Esophagus squamous epithelium (tissue), 5 donors: ENCODE measurements at regions of chr1 and their contacts with region 1.

Region 1: DNA sequence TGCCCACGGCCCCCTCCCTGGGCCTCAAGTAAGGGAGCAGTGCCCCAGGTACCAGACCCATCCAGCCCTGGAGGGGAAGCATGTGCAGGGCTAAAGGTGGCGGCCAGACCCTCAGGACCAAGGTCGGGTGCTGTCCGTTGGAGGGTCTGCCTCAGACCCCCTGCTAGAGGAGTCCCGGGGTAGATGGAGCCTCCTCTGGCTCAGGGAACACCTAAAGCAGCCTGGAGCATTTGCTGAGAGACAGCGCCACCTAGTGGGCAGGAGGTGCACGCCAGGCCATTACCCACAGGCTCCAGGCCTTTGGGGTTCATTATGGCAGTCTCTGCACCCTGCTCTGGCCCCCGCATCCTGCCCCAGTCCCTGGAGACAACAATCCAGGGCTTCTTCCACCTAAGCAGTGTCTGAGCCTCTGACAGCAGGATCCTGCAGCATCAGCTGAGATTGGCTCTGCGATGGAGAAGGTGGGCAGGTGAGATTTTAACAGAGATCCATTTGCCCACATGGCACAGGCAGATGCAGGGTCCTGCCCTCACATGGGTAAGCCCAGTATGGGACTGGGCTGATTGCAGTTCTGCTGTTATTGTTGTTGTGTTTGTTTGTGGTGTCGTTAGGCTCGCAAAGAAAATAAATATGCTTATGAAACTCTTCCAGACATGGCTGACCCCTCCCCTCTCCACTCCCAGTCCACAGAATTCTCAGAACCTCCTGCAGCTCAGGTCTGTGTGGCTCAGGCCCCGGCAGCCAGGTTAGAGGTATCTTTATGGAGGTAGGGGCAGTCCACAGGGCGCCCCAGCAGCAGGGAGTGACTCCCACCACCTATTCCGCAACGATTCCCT is 42.4 kb downstream of the CTNNBIP1 start:
- DNase-seq: peak; percentile 47
- H3K4me3 ChIP-seq: no peak overlapping the region
- H3K27ac ChIP-seq: peak overlapping the region in 2 of 4 donors; percentile 89 to 90
- H3K4me1 ChIP-seq: peaks cover 12 to 79% (median 28%) of the 10 kb centered on the region in 3 donors
- H3K27me3 ChIP-seq: no peaks in the 10 kb centered on the region
- CTCF ChIP-seq: peak; percentile 92 to 99 (median 98)
- POLR2A ChIP-seq: no peak

Region 2: GRCh38 chr1:9784508-9785133 is 83.0 kb before region 1 on chr1:
- intact Hi-C with region 1: loop called (anchors 5 kb)
- DNase-seq: no peak
- H3K4me3 ChIP-seq: no peak overlapping the region
- H3K27ac ChIP-seq: no peak overlapping the region
- H3K4me1 ChIP-seq: peaks cover 0 to 35% (median 0%) of the 10 kb centered on the region in 3 donors
- H3K27me3 ChIP-seq: no peaks in the 10 kb centered on the region
- CTCF ChIP-seq: peak; percentile 42 to 90 (median 84)
- POLR2A ChIP-seq: no peak

Region 3: GRCh38 chr1:10019561-10019960 is 151.9 kb after region 1 on chr1:
- intact Hi-C with region 1: no loop called
- DNase-seq: no peak
- H3K4me3 ChIP-seq: no peak overlapping the region
- H3K27ac ChIP-seq: no peak overlapping the region
- H3K4me1 ChIP-seq: no peaks in the 10 kb centered on the region
- H3K27me3 ChIP-seq: no peaks in the 10 kb centered on the region
- CTCF ChIP-seq: no peak
- POLR2A ChIP-seq: no peak

Region 4: DNA sequence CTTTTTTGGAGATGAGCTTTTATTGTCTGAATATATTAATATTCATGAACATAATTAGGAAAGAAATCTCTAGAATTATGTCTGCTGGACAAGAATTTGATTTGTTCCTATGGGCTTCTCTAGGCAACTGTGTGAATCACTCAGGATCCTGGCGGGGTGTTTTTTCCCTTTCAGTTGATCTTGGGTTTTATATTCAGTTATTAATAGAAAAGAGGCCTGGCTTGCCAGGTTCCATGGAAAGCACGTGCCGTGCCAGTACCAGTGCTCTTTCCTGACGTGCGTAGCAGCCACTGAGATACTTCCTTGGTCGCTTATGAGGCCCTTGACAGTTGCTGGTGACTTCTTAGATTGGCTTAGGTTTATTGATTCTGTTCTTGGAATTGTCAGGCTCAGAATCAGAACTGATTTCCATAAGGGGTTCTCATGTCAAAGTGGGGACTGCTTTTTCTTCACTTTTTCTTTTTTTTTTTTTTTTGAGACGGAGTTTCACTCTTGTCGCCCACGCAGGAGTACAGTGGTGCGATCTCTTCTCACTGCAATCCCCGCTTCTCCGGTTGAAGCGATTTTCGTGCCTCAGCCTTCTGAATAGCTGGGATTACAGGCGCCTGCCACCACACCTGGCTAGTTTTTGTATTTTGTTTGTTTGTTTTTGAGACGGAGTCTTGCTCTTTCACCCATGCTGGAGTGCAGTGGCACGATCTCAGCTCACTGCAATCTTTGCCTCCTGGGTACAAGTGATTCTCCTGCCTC is 294.1 kb after region 1 on chr1:
- intact Hi-C with region 1: no loop called
- DNase-seq: no peak
- H3K4me3 ChIP-seq: no peak overlapping the region
- H3K27ac ChIP-seq: peak overlapping the region in 3 of 4 donors; percentile 14 to 64 (median 36)
- H3K4me1 ChIP-seq: no peaks in the 10 kb centered on the region
- H3K27me3 ChIP-seq: no peaks in the 10 kb centered on the region
- CTCF ChIP-seq: no peak
- POLR2A ChIP-seq: no peak